ENCODE measurements at regions of chr6 and their contacts with region 1.

Region 1: GRCh38 chr6:16949716-16950115 is 152.1 kb upstream of the STMND1 start:
- DNase-seq: no peak
- H3K4me3 Mint-ChIP-seq: no peak overlapping the region
- H3K27ac Mint-ChIP-seq: no peak overlapping the region
- H3K4me1 Mint-ChIP-seq: peaks cover 35% of the 10 kb centered on the region
- H3K27me3 Mint-ChIP-seq: peaks cover 37% of the 10 kb centered on the region

Region 2: GRCh38 chr6:16854986-16855385 is 94.7 kb before region 1 on chr6:
- intact Hi-C with region 1: loop called (anchors 5 kb)
- DNase-seq: no peak
- H3K4me3 Mint-ChIP-seq: no peak overlapping the region
- H3K27ac Mint-ChIP-seq: no peak overlapping the region
- H3K4me1 Mint-ChIP-seq: peaks cover 34% of the 10 kb centered on the region
- H3K27me3 Mint-ChIP-seq: peaks cover 49% of the 10 kb centered on the region

Measured in activated T-helper 2 cell treated with anti-CD3 and anti-CD28 coated beads, Interferon-gamma antibody, Interleukin-2, Interleukin-4, amounts not matched to agents 10 μg/mL and 5 μg/mL and 100 μg/mL, durations not matched to agents 14 hours and 24 hours and 36 hours (primary cell).